Tibial artery (tissue), 4 donors: ENCODE measurements at regions of chr2 and their contacts with region 1.

Region 1: DNA sequence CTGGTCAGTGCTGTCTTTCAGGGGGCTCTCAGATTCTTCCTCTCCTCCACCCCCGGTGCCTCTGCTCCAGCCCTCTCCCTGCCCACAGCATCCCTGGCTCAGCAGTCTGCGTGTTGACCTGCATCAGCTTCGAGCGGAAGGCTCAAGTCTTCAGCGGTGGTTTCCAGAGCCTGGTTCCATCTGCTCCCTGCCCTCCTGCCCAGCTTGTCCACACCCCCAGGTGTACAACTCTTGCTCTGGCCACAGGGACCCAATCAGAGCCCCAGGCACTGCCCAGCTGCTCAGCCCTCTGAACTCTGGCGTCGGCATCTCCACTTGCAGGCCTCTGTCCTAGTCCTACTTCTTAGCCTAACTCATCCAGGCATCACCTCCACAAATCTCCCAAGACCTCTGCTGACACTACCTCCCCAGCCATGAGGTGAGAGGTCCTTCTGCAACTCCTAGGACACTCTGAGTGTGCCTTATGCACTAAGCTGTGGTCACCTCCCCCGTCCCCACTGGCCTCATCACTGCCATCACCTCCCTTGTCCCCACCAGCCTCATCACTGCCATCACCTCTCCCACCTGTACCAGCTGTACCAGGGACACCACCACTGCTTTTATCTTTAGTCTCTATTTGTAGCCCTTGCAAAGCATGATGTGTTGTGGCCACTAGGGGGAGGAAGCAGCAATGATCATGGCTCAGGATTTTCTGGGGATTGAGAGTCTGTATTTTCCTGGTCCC is 60.9 kb downstream of the EDAR start:
- DNase-seq: no peak
- H3K4me3 ChIP-seq: no peak overlapping the region
- H3K27ac ChIP-seq: no peak overlapping the region
- H3K4me1 ChIP-seq: peaks cover 0 to 6% (median 0%) of the 10 kb centered on the region in 4 donors
- H3K27me3 ChIP-seq: peaks cover 0 to 21% of the 10 kb centered on the region in 2 donors
- CTCF ChIP-seq: peak; percentile 56

Region 2: DNA sequence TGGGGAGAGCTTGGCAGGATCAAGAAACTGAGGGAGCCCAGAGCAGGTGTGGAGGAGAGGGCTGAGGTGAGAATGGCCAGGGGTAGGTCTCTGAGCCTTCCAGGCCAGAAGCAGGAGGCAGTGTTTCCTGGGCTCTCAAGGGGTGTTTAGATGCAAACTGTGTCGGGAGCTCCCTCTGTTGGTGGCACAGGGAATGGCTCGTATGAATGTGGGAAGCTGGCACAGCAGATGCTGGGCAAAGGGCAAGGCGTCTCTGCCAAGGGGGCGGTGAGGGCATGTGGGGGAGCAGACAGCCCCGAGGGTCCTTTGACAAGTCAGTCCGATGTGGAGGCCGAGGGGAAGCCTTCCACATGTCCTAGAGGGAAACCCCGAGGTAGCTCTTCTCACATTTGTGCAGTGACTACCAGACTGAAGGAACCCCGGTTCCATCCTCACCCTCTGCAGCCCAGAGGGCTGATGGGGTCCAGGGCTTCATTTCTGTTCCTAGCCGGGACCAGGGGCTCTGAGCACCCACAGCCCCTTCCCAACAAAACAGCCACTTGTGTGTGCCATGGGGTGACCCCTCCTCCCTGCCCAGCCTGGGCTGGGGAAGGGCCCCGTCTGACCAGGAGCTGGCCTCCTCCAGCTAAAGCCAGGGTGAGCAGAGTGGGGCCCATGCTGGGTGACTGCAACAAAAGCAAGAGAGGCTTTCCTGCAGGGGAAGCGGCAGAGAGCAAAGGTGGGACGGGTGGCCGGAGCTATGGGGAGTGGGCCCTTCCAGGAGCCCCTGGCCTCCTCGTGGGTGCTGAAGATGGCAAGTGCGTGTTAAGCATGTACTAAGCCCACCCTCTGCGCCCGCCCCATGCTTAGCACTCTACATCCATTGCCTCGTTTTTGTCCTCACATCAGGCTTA is 582.3 kb after region 1 on chr2:
- intact Hi-C with region 1: loop called (anchors 10 kb)
- DNase-seq: peak; percentile 87 to 88
- H3K4me3 ChIP-seq: no peak overlapping the region
- H3K27ac ChIP-seq: no peak overlapping the region
- H3K4me1 ChIP-seq: peaks cover 0 to 24% (median 20%) of the 10 kb centered on the region in 4 donors
- H3K27me3 ChIP-seq: no peaks in the 10 kb centered on the region
- CTCF ChIP-seq: peak; percentile 92 to 94